GM12878 (cell line): ENCODE measurements at regions of chr17 and their contacts with region 1.

Region 1: DNA sequence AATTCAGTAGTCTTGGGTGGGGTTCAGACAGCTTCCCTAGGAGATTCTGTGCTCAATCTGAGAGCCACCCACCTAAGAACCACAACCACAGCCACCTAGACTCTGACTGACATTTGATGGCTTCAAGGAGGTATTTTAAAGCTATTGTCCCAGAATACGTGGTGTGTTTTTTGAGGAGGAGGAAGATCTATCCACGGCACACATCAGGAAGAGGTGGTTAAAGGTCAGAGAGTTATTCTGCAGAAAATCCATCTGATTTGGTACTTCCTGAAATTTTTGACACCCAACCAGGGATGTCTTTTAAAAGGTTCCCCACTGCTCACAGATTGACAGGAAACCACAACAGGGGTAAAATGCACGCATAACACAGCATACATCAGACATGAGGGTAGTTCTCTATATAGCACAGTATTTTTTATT is 25.1 kb downstream of the SMARCE1 start:
- DNase-seq: no peak
- ATAC-seq: peak; percentile 29; the same call in 2 of the 3 replicates
- H3K4me3 ChIP-seq: no peak overlapping the region
- H3K27ac ChIP-seq: no peak overlapping the region
- H3K4me1 ChIP-seq: peaks cover 27% of the 10 kb centered on the region
- H3K27me3 ChIP-seq: no peaks in the 10 kb centered on the region
- CTCF ChIP-seq: no peak
- EP300 ChIP-seq: no peak
- POLR2A ChIP-seq: no peak
- RAD21 ChIP-seq: no peak

Region 2: DNA sequence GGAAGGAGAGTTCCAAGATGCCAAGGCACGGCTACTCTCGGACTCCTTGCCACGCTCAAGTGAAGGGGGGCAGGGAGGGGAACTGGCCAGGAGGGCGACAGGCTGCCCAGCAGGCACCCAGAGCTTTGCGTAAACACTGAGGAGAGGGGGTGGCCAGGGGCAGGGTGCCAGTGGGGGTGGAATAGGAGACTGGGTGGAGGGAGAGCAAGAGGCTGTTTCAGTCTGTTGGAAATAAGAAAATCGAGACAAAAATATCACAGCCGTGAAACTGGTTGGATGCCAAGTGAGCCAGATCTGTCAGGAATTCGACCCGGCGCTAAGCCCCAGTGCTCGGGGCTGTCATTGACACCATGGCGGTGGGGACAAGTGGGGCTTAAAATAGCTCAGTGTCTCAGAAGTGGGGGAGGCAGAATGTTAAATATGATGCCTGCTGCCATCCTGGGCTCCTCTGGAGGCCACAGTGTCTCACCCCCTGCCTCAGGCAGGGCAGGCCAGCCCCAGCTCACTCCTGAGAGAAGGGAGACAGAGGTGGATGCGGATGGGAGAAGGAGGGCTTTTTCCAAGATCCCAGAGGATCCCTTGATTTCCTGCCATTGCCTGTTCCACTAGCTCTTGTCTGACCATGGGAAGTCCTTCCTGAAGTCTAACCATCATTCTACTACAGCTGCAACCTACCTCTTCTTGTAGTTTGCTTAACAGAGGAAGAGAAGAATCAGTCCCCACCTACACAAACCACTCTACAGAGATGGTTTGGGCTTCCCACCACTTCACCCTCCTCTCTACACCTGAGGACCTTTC is 944.8 kb before region 1 on chr17:
- CTCF ChIA-PET with region 1: no interaction called
- POLR2A ChIA-PET with region 1: no interaction called
- RAD21 ChIA-PET with region 1: no interaction called
- SMC1A ChIA-PET with region 1: no interaction called
- in situ Hi-C with region 1: no loop called
- intact Hi-C with region 1: no loop called
- DNase-seq: no peak
- ATAC-seq: no peak
- H3K4me3 ChIP-seq: no peak overlapping the region
- H3K27ac ChIP-seq: no peak overlapping the region
- H3K4me1 ChIP-seq: peaks cover 45% of the 10 kb centered on the region
- H3K27me3 ChIP-seq: no peaks in the 10 kb centered on the region
- CTCF ChIP-seq: no peak
- EP300 ChIP-seq: no peak
- POLR2A ChIP-seq: no peak
- RAD21 ChIP-seq: no peak

Region 3: GRCh38 chr17:40564883-40565768 is 57.4 kb before region 1 on chr17 and contains the start of gene CCR7:
- CTCF ChIA-PET with region 1: interaction called, 164 read pairs
- POLR2A ChIA-PET with region 1: interaction called, 4 read pairs
- RAD21 ChIA-PET with region 1: interaction called, 6 read pairs
- SMC1A ChIA-PET with region 1: interaction called, 123 read pairs
- in situ Hi-C with region 1: no loop called
- intact Hi-C with region 1: no loop called
- DNase-seq: no peak
- ATAC-seq: peak; percentile 44
- H3K4me3 ChIP-seq: peak within 1 kb of the TSS; percentile 93
- H3K27ac ChIP-seq: peak within 1 kb of the TSS; percentile 98
- H3K4me1 ChIP-seq: peaks cover 25% of the 10 kb centered on the region
- H3K27me3 ChIP-seq: no peaks in the 10 kb centered on the region; a peak in 1 of 4 replicates
- CTCF ChIP-seq: peak in 2 of 3 experiments; percentile 16 to 24; a peak in 2 of 6 replicates
- EP300 ChIP-seq: peak; percentile 12 to 51; a peak in 1 of 4 replicates
- POLR2A ChIP-seq: peak; percentile 96
- RAD21 ChIP-seq: 0 out of 2 replicates have a peak, but pooled peaks have one; percentile 7
- polyA plus RNA-seq, gene CCR7: 235 to 294 TPM

Region 4: DNA sequence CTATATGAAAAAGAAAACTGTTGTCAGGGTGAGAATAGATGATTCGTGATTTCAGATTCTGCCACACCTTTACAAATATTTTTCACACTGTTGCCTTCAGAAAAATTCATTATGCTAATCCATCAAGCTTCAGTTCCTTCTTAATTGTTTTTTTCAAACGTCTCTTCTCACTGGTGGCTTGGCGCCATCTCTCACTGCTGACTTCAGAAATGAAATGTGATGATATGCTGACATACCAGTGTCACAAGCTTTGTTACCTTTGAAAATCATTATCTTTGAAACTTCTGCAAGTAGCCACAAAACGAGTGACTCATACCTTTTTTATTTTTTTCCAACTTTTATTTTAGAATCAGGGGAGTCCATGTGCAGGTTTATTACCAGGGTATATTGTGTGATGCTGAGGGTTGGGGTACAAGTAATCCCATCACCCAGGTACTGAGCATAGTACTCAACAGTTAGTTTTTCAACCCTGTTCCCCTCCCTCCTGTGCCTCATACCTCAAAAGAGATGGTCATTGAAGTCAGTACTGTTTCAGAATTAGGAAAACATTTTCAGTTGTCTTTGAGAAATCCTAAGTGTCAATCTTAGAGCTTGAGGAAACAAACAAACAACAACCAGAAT is 56.5 kb after region 1 on chr17:
- CTCF ChIA-PET with region 1: interaction called, 6 read pairs
- POLR2A ChIA-PET with region 1: interaction called, 5 read pairs
- RAD21 ChIA-PET with region 1: interaction called, 15 read pairs
- SMC1A ChIA-PET with region 1: interaction called, 6 read pairs
- in situ Hi-C with region 1: no loop called
- intact Hi-C with region 1: no loop called
- DNase-seq: no peak
- ATAC-seq: peak; percentile 84
- H3K4me3 ChIP-seq: no peak overlapping the region; the same call in 1 of the 2 replicates
- H3K27ac ChIP-seq: no peak overlapping the region
- H3K4me1 ChIP-seq: no peaks in the 10 kb centered on the region
- H3K27me3 ChIP-seq: peaks cover 0 to 8% of the 10 kb centered on the region in 2 experiments; a peak in 1 of 4 replicates
- CTCF ChIP-seq: no peak
- EP300 ChIP-seq: peak in 1 of 2 experiments; percentile 52; a peak in 1 of 4 replicates
- POLR2A ChIP-seq: no peak
- RAD21 ChIP-seq: no peak

Region 5: DNA sequence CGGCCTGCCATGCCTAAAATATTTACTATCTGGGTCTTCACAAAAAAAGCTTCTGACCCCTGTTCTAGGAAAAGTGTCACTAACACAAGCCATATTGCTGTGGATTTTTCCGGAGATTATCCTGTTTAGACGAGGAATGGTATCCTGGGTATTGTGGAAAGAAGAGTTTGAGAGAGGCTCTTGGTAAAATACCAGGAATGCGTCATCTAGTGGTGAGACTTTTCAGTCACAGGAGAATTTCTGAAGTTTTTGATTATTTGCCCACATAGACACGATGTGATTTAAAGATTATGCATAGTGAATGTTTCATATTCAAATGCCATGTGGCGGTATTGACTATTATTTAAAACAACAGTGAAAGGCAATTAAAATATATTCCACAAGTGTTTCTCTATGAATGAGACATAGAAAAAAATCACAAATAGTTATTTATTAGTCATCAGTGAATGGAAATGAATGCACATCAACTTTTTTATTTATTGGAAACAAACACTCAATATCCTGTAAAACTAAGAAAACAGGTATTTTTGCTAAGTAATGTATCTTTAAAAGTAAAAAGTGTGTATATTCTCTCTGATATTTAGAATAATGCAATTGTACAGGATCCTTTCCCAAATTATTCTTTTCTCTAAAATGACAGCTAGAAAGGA is 169.4 kb after region 1 on chr17:
- CTCF ChIA-PET with region 1: interaction called, 43 read pairs
- POLR2A ChIA-PET with region 1: interaction called, 3 read pairs
- RAD21 ChIA-PET with region 1: interaction called, 18 read pairs
- SMC1A ChIA-PET with region 1: interaction called, 28 read pairs
- in situ Hi-C with region 1: no loop called
- intact Hi-C with region 1: loop called (anchors 2 kb)
- DNase-seq: no peak
- ATAC-seq: peak; percentile 44; the same call in 1 of the 3 replicates
- H3K4me3 ChIP-seq: no peak overlapping the region
- H3K27ac ChIP-seq: no peak overlapping the region
- H3K4me1 ChIP-seq: no peaks in the 10 kb centered on the region
- H3K27me3 ChIP-seq: peaks cover 2 to 7% of the 10 kb centered on the region in 2 experiments; a peak in 1 of 4 replicates
- CTCF ChIP-seq: peak; percentile 44 to 61 (median 59)
- EP300 ChIP-seq: no peak
- POLR2A ChIP-seq: no peak
- RAD21 ChIP-seq: peak; percentile 52

Region 6: GRCh38 chr17:40857535-40857934 is 235.0 kb after region 1 on chr17:
- CTCF ChIA-PET with region 1: interaction called, 19 read pairs
- POLR2A ChIA-PET with region 1: no interaction called
- RAD21 ChIA-PET with region 1: interaction called, 3 read pairs
- SMC1A ChIA-PET with region 1: interaction called, 6 read pairs
- in situ Hi-C with region 1: no loop called
- intact Hi-C with region 1: no loop called
- DNase-seq: no peak
- ATAC-seq: no peak
- H3K4me3 ChIP-seq: no peak overlapping the region
- H3K27ac ChIP-seq: no peak overlapping the region
- H3K4me1 ChIP-seq: no peaks in the 10 kb centered on the region
- H3K27me3 ChIP-seq: peaks cover 0 to 4% of the 10 kb centered on the region in 2 experiments; a peak in 3 of 4 replicates
- CTCF ChIP-seq: no peak
- EP300 ChIP-seq: no peak
- POLR2A ChIP-seq: no peak
- RAD21 ChIP-seq: no peak

Region 7: DNA sequence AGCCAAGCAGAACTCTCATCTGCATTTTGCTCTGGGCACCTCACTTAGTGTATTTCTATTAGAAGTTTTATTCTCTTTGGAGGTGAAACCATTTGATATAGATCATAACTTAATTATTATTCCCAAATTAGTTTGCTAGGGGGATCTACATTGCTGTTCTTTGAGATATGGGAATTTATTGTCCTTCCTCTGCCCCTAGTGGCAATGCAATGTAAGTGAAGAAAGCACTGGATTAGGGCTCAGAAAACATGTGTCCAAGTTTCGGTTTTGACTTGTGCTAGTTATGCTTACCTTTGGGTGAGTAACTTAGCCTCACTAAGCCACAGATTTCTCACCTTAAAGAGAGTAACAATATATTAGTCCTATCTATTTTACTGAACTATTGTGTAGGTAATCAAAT is 341.3 kb after region 1 on chr17:
- CTCF ChIA-PET with region 1: no interaction called
- POLR2A ChIA-PET with region 1: no interaction called
- RAD21 ChIA-PET with region 1: no interaction called
- SMC1A ChIA-PET with region 1: no interaction called
- in situ Hi-C with region 1: no loop called
- intact Hi-C with region 1: no loop called
- DNase-seq: no peak
- ATAC-seq: peak; percentile 59; the same call in 2 of the 3 replicates
- H3K4me3 ChIP-seq: no peak overlapping the region
- H3K27ac ChIP-seq: no peak overlapping the region
- H3K4me1 ChIP-seq: no peaks in the 10 kb centered on the region
- H3K27me3 ChIP-seq: no peaks in the 10 kb centered on the region
- CTCF ChIP-seq: peak; percentile 31 to 63 (median 59); a peak in 4 of 6 replicates
- EP300 ChIP-seq: no peak
- POLR2A ChIP-seq: no peak
- RAD21 ChIP-seq: no peak

Region 8: DNA sequence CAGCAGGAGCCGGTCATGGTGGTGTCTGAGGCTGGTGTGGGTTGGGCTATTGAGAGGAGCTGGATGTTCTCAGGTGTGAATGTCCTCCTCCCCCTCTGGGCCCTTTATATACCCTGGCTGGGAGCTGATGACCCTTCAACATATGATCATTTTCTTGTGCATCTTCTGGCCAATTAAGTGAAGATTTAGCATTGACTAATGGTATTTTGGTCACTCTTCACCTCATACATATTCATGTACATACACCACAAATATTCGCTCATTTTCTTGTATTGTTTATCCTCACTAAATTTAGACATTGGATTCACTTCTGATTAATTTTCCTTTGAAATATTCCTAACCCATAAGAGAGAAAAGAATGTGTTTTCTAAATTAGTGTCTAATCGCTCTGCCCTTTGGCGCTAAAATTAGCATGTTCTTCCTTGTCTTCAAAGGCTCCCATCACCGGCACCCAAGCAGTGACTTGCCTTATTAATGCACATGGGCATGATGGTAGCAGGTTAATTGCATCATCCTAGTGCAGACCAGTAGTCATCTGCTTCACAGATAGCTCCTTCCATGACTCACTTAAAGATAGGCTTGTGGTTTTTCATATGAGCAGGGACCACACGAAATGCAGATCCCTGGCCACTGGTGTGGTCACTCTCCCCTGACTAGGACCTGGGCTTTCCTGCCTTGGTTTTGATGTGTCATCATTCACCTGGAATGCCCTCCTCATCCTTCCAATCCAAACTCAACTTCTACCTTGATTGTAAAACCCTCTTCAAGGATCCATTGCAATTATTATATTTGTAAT is 443.5 kb after region 1 on chr17 and contains the start of gene KRTAP2-4:
- CTCF ChIA-PET with region 1: no interaction called
- POLR2A ChIA-PET with region 1: no interaction called
- RAD21 ChIA-PET with region 1: no interaction called
- SMC1A ChIA-PET with region 1: no interaction called
- in situ Hi-C with region 1: no loop called
- intact Hi-C with region 1: no loop called
- DNase-seq: no peak
- ATAC-seq: no peak
- H3K4me3 ChIP-seq: no peak within 1 kb of the TSS
- H3K27ac ChIP-seq: no peak within 1 kb of the TSS
- H3K4me1 ChIP-seq: no peaks in the 10 kb centered on the region
- H3K27me3 ChIP-seq: no peaks in the 10 kb centered on the region; a peak in 2 of 4 replicates
- CTCF ChIP-seq: no peak
- EP300 ChIP-seq: no peak
- POLR2A ChIP-seq: no peak
- RAD21 ChIP-seq: no peak
- polyA plus RNA-seq, gene KRTAP2-4: not detected